Adrenal gland (tissue), 19 donors: ENCODE measurements at regions of chr10 and their contacts with region 1.

Region 1: DNA sequence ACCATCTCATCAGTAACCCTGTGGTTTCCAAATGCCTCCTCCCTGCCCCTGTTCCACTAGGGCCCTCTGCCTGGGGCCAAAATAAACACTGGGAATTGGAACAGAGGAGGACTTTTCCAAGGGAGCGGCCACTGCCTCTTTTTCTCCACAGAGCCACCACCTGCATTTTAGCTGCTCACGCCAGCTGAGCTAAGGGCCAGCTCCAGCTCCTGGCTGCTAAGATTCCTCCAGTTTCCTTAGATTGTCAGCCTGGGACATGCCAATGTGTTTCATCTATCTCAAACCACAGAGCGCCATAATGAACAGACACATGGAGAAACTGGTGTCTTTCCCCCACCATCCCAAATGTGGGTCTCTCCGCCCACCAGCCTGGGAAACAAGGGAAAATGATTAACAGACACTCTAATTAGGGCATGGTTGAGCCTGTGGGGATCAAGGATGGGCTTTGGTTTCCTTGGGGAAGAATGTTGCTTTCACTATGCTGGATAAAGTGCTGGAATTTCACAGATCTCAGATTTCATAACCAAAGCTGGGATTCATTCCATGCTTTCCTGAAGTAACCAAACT is 52.2 kb downstream of the ASB13 start:
- DNase-seq: no peak
- H3K4me3 ChIP-seq: no peak overlapping the region
- H3K27ac ChIP-seq: peak overlapping the region in 1 of 5 donors; percentile 29
- H3K4me1 ChIP-seq: peaks cover 0 to 9% of the 10 kb centered on the region in 2 donors
- H3K27me3 ChIP-seq: no peaks in the 10 kb centered on the region
- CTCF ChIP-seq: no peak
- POLR2A ChIP-seq: no peak

Region 2: GRCh38 chr10:5404208-5405041 is 209.8 kb before region 1 on chr10 and contains the start of gene TUBAL3:
- intact Hi-C with region 1: no loop called
- DNase-seq: no peak
- H3K4me3 ChIP-seq: no peak within 1 kb of the TSS
- H3K27ac ChIP-seq: no peak within 1 kb of the TSS
- H3K4me1 ChIP-seq: no peaks in the 10 kb centered on the region
- H3K27me3 ChIP-seq: no peaks in the 10 kb centered on the region
- CTCF ChIP-seq: no peak
- POLR2A ChIP-seq: no peak
- total RNA-seq, gene TUBAL3: not detected

Region 3: DNA sequence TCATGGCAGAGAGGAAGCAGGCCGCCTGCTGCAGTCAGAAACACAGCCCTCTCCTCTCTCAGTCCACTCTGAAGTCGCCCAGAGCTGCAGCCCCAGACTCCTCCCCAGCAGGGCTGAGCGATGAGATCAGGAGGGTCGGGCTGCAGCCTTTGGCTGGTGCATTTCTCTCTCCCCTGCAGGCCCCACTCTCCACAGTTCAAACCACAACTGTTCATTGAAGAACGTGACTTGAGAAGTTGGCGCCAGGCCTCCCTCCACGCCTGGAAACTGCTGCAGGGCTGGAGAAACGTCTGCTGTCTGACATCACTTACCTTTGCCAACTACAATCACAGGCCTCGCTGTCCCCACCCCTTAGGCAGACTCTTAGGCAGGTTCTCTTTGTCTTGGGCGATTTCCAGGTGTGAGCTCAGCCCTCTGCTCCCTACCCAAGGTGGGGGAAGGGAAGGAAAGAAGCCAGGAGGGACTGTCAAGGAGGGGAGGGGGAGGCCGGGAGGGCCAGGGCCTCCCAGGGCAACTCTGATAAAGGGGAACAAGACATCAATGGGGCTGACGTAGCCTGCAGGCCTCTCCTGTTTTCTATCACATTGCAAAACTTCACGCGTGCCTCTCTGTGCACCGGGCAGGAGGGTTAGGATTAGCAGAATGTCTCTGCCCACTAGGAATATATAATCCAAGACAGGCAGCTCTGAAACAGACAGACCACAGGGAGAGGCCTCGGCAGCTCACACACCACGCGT is 147.7 kb before region 1 on chr10:
- intact Hi-C with region 1: loop called in 1 of 2 experiments (anchors 10 kb)
- DNase-seq: peak in 1 of 7 donors; percentile 75
- H3K4me3 ChIP-seq: no peak overlapping the region
- H3K27ac ChIP-seq: peak overlapping the region in 1 of 5 donors; percentile 41
- H3K4me1 ChIP-seq: no peaks in the 10 kb centered on the region
- H3K27me3 ChIP-seq: no peaks in the 10 kb centered on the region
- CTCF ChIP-seq: no peak
- POLR2A ChIP-seq: no peak